Testis (tissue), 5 donors: ENCODE measurements at regions of chr16 and their contacts with region 1.

Region 1: GRCh38 chr16:55711959-55712876 is 56.4 kb downstream of the SLC6A2 start:
- DNase-seq: peak; percentile 85
- H3K4me3 ChIP-seq: no peak overlapping the region
- H3K27ac ChIP-seq: no peak overlapping the region
- H3K4me1 ChIP-seq: no peaks in the 10 kb centered on the region
- H3K27me3 ChIP-seq: no peaks in the 10 kb centered on the region
- CTCF ChIP-seq: peak; percentile 33 to 76 (median 54)
- POLR2A ChIP-seq: no peak

Region 2: DNA sequence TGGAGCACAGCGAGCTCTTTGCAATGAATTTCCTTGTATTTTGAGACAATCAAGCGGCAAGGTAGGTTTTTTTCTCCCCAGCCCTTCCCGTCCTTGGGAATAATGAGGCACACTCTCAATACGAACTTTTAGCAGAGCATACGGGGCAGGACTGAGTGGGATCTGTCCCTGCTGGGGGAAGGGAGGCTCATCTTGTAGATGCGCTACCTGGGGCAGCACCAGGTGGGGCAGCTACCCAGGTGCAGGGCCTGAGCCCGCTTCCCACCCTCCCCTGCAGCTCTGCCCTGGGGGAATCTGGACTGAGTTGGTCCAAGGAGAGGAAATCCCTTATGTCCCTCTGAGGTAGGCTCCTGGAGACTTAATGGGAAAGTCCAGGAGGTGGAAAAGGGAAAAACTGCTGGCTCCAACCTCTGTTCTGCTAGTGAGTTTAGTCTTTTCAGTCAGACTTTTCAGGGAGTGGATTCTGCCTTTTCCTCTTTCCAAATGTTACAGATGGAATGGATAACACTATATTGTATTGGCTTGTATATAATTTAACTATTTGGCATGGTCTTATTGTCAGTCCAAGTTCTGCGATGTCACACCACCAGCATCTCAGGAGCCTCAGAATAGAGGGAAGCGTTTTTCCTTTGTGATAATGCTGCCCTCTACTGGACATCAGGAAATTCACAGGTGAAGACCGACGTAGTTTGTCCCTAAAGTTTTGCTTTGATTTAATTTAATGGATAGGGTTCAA is 130.3 kb after region 1 on chr16:
- intact Hi-C with region 1: loop called (anchors 10 kb)
- DNase-seq: peak; percentile 41
- H3K4me3 ChIP-seq: no peak overlapping the region
- H3K27ac ChIP-seq: no peak overlapping the region
- H3K4me1 ChIP-seq: no peaks in the 10 kb centered on the region
- H3K27me3 ChIP-seq: no peaks in the 10 kb centered on the region
- CTCF ChIP-seq: peak; percentile 78 to 86 (median 79)
- POLR2A ChIP-seq: no peak